BJ (cell line): ENCODE measurements at regions of chr17 and their contacts with region 1.

Region 1: DNA sequence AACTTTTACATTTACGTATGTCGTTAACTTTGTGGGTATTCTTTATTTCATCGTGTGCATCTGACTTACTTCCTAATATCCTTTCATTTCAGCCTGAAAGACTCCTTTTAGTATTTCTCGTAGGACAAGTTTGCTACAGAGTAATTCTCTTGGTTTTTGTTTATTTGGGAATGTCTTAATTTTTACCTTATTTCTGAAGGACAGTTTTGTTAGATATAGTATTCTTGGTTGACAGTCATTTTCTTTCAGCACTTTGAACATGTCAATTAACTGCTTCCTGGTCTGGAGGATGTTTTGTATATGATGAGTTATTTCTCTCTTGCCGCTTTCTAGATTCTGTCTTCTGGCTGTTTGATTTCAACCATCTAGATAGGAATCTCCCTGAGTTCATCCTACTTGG is 109.2 kb upstream of the NACA2 start:
- DNase-seq: no peak
- H3K4me3 ChIP-seq: no peak overlapping the region
- H3K27me3 ChIP-seq: no peaks in the 10 kb centered on the region
- CTCF ChIP-seq: no peak

Region 2: GRCh38 chr17:61737820-61738219 is 37.6 kb after region 1 on chr17:
- CTCF ChIA-PET with region 1: no interaction called
- POLR2A ChIA-PET with region 1: interaction called, 11 read pairs
- DNase-seq: no peak
- H3K4me3 ChIP-seq: no peak overlapping the region
- H3K27me3 ChIP-seq: no peaks in the 10 kb centered on the region
- CTCF ChIP-seq: no peak